ENCODE measurements at regions of chr11 and their contacts with region 1.

Region 1: GRCh38 chr11:3412837-3413236 is 33.9 kb upstream of the ZNF195 start:
- DNase-seq: no peak
- ATAC-seq: no peak
- H3K4me3 Mint-ChIP-seq: no peak overlapping the region
- H3K27ac Mint-ChIP-seq: no peak overlapping the region
- H3K4me1 Mint-ChIP-seq: no peaks in the 10 kb centered on the region
- H3K27me3 Mint-ChIP-seq: no peaks in the 10 kb centered on the region

Region 2: DNA sequence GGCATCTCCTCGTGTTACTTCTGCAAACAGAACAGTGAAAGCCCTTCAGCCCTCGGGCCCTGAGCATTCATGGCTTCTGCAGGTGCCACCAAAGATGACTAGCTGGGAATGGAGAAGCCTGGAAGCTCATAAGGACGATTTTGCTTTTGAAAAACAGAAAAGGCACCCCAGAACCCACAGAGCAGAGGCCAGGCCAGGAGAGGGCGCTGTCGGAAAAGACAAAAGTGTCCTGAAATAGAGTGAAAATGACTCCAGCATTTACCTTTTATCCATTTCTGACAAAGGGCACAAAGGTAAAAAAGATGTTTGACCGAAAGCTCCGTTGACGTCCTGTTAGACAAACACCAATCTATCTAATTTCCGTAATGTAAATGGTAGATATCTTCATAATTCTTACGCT is 71.5 kb before region 1 on chr11:
- CTCF ChIA-PET with region 1: interaction called, 52 read pairs
- POLR2A ChIA-PET with region 1: no interaction called
- DNase-seq: peak; percentile 75
- ATAC-seq: peak; percentile 58
- H3K4me3 Mint-ChIP-seq: no peak overlapping the region
- H3K27ac Mint-ChIP-seq: no peak overlapping the region
- H3K4me1 Mint-ChIP-seq: no peaks in the 10 kb centered on the region
- H3K27me3 Mint-ChIP-seq: peaks cover 19% of the 10 kb centered on the region

Region 3: GRCh38 chr11:3378426-3379423 is 34.1 kb before region 1 on chr11 and contains the start of gene ZNF195:
- CTCF ChIA-PET with region 1: interaction called, 36 read pairs
- POLR2A ChIA-PET with region 1: no interaction called
- DNase-seq: peak; percentile 99
- ATAC-seq: peak; percentile 99
- H3K4me3 Mint-ChIP-seq: peak within 1 kb of the TSS; percentile 97
- H3K27ac Mint-ChIP-seq: peak within 1 kb of the TSS; percentile 99
- H3K4me1 Mint-ChIP-seq: peaks cover 43% of the 10 kb centered on the region
- H3K27me3 Mint-ChIP-seq: no peaks in the 10 kb centered on the region
- total RNA-seq, gene ZNF195: 28.5 to 36.9 TPM

Region 4: DNA sequence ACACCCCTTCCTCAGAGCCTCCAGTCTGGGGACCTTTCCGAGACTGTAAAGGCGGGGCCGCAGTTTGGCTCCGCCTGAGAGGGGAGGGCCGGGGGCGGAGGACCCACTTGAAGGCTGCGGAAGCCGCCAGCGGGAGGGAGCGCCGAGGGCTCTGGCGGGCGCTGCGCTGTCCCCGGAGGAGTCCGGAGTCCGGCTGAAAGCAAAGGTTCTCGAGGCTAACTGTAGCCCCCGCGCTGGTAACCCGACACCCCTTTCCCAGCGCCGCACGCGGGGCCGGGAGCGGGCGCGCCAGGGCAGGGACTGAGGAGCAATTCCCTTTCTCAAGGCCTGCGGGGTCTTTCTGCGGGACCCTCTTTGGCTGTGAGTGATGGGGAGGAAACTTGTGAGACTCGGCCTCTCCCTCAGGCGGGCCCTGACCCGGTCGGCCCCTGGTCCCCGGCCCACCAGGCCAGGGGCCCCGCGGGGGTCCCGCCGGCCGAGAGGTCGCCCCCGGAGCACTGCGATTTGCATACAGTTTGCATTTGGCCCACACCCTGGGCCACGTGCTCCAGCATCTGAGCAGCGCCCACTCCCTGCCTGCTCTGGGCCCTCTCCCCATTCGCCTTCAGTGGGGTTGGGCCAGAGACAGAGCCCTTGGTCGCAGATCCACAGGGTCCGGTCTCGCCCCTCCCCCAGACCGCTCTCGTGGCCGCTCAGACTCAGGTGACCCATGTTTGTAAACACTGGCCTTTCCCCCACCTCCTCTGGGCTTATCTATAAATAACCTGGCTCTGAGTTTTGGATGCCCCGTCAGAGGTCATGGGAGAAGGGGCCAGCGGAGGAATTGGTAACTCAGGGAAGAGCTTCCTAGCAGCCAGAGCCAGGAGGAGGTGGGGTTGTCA is 229.5 kb after region 1 on chr11:
- CTCF ChIA-PET with region 1: no interaction called
- POLR2A ChIA-PET with region 1: no interaction called
- DNase-seq: peak; percentile 41
- ATAC-seq: peak; percentile 80
- H3K4me3 Mint-ChIP-seq: no peak overlapping the region
- H3K27ac Mint-ChIP-seq: no peak overlapping the region
- H3K4me1 Mint-ChIP-seq: peaks cover 6% of the 10 kb centered on the region
- H3K27me3 Mint-ChIP-seq: peaks cover 30% of the 10 kb centered on the region